ENCODE measurements at regions of chr2 and their contacts with region 1.

Region 1: DNA sequence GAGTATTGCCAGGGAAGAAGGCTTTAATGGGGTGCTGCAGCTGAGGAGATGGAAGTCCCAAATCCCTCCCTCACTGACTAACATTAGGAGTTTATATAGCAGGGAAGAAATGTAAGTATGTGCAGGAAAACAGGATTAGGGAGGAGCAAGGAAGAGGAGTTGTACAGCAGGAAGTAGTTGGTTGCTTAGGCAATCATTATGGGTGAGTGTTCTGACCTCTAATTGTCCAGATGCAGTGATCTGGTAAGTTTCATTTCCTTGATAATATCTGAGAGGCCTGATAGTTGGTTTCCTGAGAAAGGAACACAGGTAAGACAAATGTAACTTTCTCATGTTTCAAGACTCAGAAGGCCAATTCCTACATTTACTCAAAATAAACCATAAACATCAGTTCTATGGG is 331.9 kb upstream of the GULP1 start:
- DNase-seq: no peak
- H3K4me3 ChIP-seq: no peak overlapping the region
- H3K27ac ChIP-seq: peak overlapping the region; percentile 1 to 77
- H3K4me1 ChIP-seq: peaks cover 0 to 8% of the 10 kb centered on the region in 2 donors
- H3K27me3 ChIP-seq: no peaks in the 10 kb centered on the region
- CTCF ChIP-seq: no peak

Region 2: GRCh38 chr2:187869195-187869594 is 90.6 kb before region 1 on chr2:
- intact Hi-C with region 1: no loop called
- DNase-seq: no peak
- H3K4me3 ChIP-seq: no peak overlapping the region
- H3K27ac ChIP-seq: no peak overlapping the region
- H3K4me1 ChIP-seq: no peaks in the 10 kb centered on the region
- H3K27me3 ChIP-seq: no peaks in the 10 kb centered on the region
- CTCF ChIP-seq: no peak

Region 3: DNA sequence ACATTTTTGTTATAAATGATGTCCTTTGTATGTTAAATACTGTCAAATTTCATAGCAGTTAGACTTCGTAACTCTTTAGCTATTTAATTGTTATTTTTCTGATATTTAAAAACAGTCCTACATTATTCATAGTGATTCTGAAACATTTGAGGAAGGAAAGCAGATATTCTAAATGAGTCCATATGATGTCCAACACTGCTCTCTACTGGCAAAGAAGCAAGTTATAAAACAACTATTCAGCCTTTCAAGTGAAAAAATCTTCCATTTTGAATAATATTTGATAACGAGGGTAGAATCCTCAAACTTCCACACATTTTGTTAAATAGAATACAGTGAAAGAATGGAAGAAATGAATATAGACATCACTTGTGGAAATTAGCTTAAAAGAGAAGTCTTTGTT is 552.6 kb after region 1 on chr2:
- intact Hi-C with region 1: loop called (anchors 10 kb)
- DNase-seq: no peak
- H3K4me3 ChIP-seq: no peak overlapping the region
- H3K27ac ChIP-seq: no peak overlapping the region
- H3K4me1 ChIP-seq: peaks cover 2 to 7% of the 10 kb centered on the region in 2 donors
- H3K27me3 ChIP-seq: no peaks in the 10 kb centered on the region
- CTCF ChIP-seq: peak; percentile 48 to 60 (median 48)

Measured in ascending aorta (tissue), 2 donors.